SK-N-SH (cell line): ENCODE measurements at regions of chr6 and their contacts with region 1.

Region 1: GRCh38 chr6:112180095-112180820 is 74.1 kb downstream of the LAMA4 start:
- DNase-seq: peak; percentile 56
- H3K4me3 ChIP-seq: no peak overlapping the region; a peak in 1 of 4 replicates
- H3K27ac ChIP-seq: no peak overlapping the region; a peak in 2 of 4 replicates
- H3K4me1 ChIP-seq: no peaks in the 10 kb centered on the region; a peak in 2 of 4 replicates
- H3K27me3 ChIP-seq: no peaks in the 10 kb centered on the region
- CTCF ChIP-seq: peak; percentile 86
- EP300 ChIP-seq: no peak
- RAD21 ChIP-seq: peak; percentile 96

Region 2: GRCh38 chr6:112061605-112062004 is 118.7 kb before region 1 on chr6:
- CTCF ChIA-PET with region 1: no interaction called
- POLR2A ChIA-PET with region 1: no interaction called
- DNase-seq: no peak
- H3K4me3 ChIP-seq: no peak overlapping the region
- H3K27ac ChIP-seq: no peak overlapping the region
- H3K4me1 ChIP-seq: no peaks in the 10 kb centered on the region
- H3K27me3 ChIP-seq: no peaks in the 10 kb centered on the region
- CTCF ChIP-seq: no peak
- EP300 ChIP-seq: no peak
- RAD21 ChIP-seq: no peak

Region 3: GRCh38 chr6:112232845-112233256 is 52.6 kb after region 1 on chr6:
- CTCF ChIA-PET with region 1: interaction called, 13 read pairs
- POLR2A ChIA-PET with region 1: no interaction called
- DNase-seq: peak; percentile 59
- H3K4me3 ChIP-seq: peak overlapping the region; percentile 10 to 16; a peak in 3 of 4 replicates
- H3K27ac ChIP-seq: peak overlapping the region; percentile 92 to 97
- H3K4me1 ChIP-seq: peaks cover 23 to 48% of the 10 kb centered on the region in 2 experiments
- H3K27me3 ChIP-seq: no peaks in the 10 kb centered on the region
- CTCF ChIP-seq: no peak
- EP300 ChIP-seq: peak; percentile 51 to 71; a peak in 2 of 4 replicates
- RAD21 ChIP-seq: 0 out of 2 replicates have a peak, but pooled peaks have one; percentile 1

Region 4: DNA sequence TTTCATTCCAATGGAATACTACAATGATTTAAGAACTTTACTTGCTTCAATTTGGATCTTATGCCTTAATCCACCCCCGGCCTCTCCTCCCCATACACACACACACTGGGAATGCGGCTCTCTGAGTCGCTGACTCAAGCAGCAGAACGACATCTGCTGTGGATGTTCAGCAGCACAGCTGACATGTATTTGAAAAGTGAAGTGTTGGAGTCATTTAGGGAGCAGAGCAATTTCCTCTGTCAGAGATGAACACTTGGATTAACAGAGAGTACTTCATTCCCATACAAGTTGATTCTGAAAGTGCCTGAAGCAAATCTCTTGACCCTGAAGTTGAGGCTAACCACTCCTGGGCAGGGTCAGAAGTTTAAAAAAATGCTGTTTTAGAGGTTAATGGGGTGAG is 102.0 kb after region 1 on chr6:
- CTCF ChIA-PET with region 1: interaction called, 44 read pairs
- POLR2A ChIA-PET with region 1: no interaction called
- DNase-seq: peak; percentile 53
- H3K4me3 ChIP-seq: no peak overlapping the region
- H3K27ac ChIP-seq: peak overlapping the region; percentile 56 to 68
- H3K4me1 ChIP-seq: peaks cover 6 to 28% of the 10 kb centered on the region in 2 experiments; a peak in 3 of 4 replicates
- H3K27me3 ChIP-seq: no peaks in the 10 kb centered on the region
- CTCF ChIP-seq: peak; percentile 56
- EP300 ChIP-seq: peak in 1 of 2 experiments; percentile 51; a peak in 1 of 4 replicates
- RAD21 ChIP-seq: peak; percentile 75

Region 5: GRCh38 chr6:112296122-112296521 is 115.9 kb after region 1 on chr6:
- CTCF ChIA-PET with region 1: interaction called, 11 read pairs
- POLR2A ChIA-PET with region 1: no interaction called
- DNase-seq: no peak
- H3K4me3 ChIP-seq: no peak overlapping the region
- H3K27ac ChIP-seq: peak overlapping the region in 1 of 2 experiments; percentile 99; a peak in 1 of 4 replicates
- H3K4me1 ChIP-seq: peaks cover 0 to 36% of the 10 kb centered on the region in 2 experiments; a peak in 3 of 4 replicates
- H3K27me3 ChIP-seq: no peaks in the 10 kb centered on the region
- CTCF ChIP-seq: peak; percentile 67
- EP300 ChIP-seq: no peak
- RAD21 ChIP-seq: peak; percentile 38; the same call in 1 of the 2 replicates

Region 6: GRCh38 chr6:112311950-112312547 is 131.8 kb after region 1 on chr6:
- CTCF ChIA-PET with region 1: interaction called, 111 read pairs
- POLR2A ChIA-PET with region 1: interaction called, 3 read pairs
- DNase-seq: peak; percentile 54
- H3K4me3 ChIP-seq: peak overlapping the region in 1 of 2 experiments; percentile 10; a peak in 1 of 4 replicates
- H3K27ac ChIP-seq: peak overlapping the region in 1 of 2 experiments; percentile 3; a peak in 2 of 4 replicates
- H3K4me1 ChIP-seq: no peaks in the 10 kb centered on the region; a peak in 1 of 4 replicates
- H3K27me3 ChIP-seq: no peaks in the 10 kb centered on the region
- CTCF ChIP-seq: peak; percentile 82
- EP300 ChIP-seq: no peak
- RAD21 ChIP-seq: peak; percentile 91